CD8-positive, alpha-beta T cell (primary cell): ENCODE measurements at regions of chr3 and their contacts with region 1.

Region 1: DNA sequence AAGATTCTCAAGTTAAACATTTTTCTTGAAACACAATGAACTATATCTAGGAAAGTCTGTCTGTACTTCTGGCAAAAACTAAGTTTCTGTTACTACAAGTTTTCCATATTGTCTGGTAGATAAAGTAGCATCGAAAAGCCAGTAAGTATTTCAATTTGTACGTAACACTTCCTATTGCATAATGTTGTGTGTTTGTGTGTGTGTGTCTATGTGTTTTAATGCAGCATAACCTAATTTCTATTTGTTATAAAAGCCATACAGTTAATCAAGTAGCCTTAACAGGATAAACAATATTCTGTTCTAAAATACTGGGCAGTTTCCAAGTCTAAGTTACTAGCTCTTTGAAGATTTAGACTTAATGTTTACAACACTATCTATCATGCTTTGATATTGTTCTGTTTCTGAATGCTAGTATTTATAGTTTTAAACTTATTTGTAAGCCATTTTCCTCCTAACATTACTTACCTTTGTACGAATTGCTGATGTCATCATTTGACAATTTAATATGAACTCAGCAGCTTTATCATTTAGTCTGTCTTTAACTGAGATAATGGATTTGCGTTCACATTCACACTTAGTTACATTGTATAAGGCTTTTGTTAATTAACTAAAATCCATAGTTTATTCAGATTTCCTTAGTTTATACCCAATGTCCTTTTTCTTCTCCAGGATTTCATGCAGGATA is 163.9 kb downstream of the CBLB start:
- DNase-seq: no peak
- ATAC-seq: no peak
- H3K4me3 ChIP-seq: no peak overlapping the region
- H3K4me3 Mint-ChIP-seq: no peak overlapping the region
- H3K27ac ChIP-seq: no peak overlapping the region
- H3K27ac Mint-ChIP-seq: peak overlapping the region; percentile 18
- H3K4me1 ChIP-seq: no peaks in the 10 kb centered on the region
- H3K4me1 Mint-ChIP-seq: peaks cover 25% of the 10 kb centered on the region
- H3K27me3 ChIP-seq: no peaks in the 10 kb centered on the region
- H3K27me3 Mint-ChIP-seq: no peaks in the 10 kb centered on the region
- CTCF ChIP-seq: no peak

Region 2: DNA sequence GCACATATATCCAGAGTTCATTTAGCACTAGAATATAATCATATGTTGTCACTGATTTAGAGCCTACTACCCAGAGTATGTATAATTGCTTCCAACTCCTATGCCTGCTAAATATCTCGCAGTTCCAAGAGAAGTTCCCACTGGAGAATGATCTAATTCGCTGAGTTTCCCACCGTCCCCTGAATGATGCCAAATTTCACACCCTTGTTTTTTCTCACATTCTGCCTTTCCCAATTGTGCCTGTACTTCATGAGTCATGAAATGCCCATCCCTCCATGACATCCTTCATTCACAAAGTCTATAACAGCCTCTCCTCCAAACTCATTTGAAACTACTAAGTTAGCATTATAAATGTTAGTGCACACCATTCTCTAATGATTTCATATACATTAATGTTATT is 13.2 kb before region 1 on chr3:
- CTCF ChIA-PET with region 1: no interaction called
- POLR2A ChIA-PET with region 1: no interaction called
- intact Hi-C with region 1: loop called in 1 of 2 experiments (anchors 2 kb)
- DNase-seq: no peak
- ATAC-seq: no peak
- H3K4me3 ChIP-seq: no peak overlapping the region
- H3K4me3 Mint-ChIP-seq: no peak overlapping the region
- H3K27ac ChIP-seq: no peak overlapping the region
- H3K27ac Mint-ChIP-seq: peak overlapping the region; percentile 46
- H3K4me1 ChIP-seq: peaks cover 19% of the 10 kb centered on the region
- H3K4me1 Mint-ChIP-seq: peaks cover 45% of the 10 kb centered on the region
- H3K27me3 ChIP-seq: no peaks in the 10 kb centered on the region
- H3K27me3 Mint-ChIP-seq: no peaks in the 10 kb centered on the region
- CTCF ChIP-seq: no peak

Region 3: DNA sequence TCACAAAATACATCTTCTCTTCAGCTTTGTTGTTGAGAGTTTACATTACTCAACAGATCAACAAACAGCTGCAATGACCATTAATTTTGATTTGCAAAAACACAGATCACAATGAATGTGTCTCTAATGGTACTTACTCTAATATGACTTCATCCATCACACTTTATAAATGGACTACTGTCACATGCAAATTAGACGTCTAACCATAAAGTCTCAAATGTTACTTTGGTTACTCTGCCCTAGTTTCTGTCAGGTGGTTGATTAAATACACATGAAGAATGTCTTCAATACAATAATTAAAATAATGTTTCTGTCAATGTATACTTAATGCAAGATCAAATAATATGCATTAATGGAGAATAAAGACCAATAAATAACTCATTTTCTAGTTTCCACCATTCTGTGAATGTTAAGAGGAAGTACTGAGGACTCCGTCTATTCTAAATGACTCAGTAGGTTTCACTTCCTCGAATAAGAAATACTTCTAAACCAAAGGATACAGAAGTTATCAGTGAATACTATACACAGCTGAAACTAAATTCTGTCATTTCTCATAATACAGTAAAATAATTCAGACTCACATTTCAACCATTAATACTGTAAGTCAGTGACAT is 18.2 kb after region 1 on chr3:
- CTCF ChIA-PET with region 1: interaction called, 3 read pairs
- POLR2A ChIA-PET with region 1: no interaction called
- intact Hi-C with region 1: loop called in 1 of 2 experiments (anchors 2 kb)
- DNase-seq: peak in 1 of 9 experiments; percentile 44
- ATAC-seq: no peak
- H3K4me3 ChIP-seq: no peak overlapping the region
- H3K4me3 Mint-ChIP-seq: peak overlapping the region; percentile 22
- H3K27ac ChIP-seq: peak overlapping the region in 1 of 2 experiments; percentile 5
- H3K27ac Mint-ChIP-seq: peak overlapping the region; percentile 53
- H3K4me1 ChIP-seq: peaks cover 9% of the 10 kb centered on the region
- H3K4me1 Mint-ChIP-seq: peaks cover 29% of the 10 kb centered on the region
- H3K27me3 ChIP-seq: no peaks in the 10 kb centered on the region
- H3K27me3 Mint-ChIP-seq: no peaks in the 10 kb centered on the region
- CTCF ChIP-seq: no peak